MCF 10A (cell line): ENCODE measurements at regions of chr7 and their contacts with region 1.

Region 1: DNA sequence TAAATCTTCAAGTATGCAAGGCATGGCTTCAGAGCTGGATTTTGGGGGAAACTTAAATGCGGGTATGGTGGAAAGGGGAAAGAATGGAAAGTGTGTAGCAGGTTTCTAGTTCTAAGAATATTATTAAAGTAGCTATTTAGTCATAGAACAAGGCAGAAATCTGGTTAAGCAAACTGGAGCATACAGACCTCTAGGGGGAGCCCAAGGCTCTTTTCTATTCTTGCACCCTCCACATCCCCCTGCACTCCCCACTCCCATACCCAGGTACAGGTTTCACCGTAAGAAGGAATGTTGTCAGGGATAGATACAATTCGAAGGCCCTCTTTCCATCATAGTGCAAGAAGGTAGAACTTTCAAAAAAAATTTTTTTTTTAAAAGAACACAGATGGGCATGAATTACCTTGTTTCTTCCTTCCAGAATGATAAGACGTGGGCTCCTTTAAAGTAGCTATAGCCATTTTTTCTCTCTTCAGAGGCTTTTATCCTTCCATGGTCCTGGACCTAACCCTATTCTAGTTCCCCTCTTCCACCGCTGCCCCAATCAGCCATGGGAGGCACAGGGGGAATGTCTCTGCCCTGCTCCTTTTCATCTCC is 41.5 kb upstream of the SMIM30 start:
- DNase-seq: peak; percentile 54
- H3K4me3 Mint-ChIP-seq: no peak overlapping the region
- H3K27ac Mint-ChIP-seq: no peak overlapping the region
- H3K4me1 Mint-ChIP-seq: no peaks in the 10 kb centered on the region
- H3K27me3 Mint-ChIP-seq: no peaks in the 10 kb centered on the region
- CTCF ChIP-seq: peak; percentile 78

Region 2: DNA sequence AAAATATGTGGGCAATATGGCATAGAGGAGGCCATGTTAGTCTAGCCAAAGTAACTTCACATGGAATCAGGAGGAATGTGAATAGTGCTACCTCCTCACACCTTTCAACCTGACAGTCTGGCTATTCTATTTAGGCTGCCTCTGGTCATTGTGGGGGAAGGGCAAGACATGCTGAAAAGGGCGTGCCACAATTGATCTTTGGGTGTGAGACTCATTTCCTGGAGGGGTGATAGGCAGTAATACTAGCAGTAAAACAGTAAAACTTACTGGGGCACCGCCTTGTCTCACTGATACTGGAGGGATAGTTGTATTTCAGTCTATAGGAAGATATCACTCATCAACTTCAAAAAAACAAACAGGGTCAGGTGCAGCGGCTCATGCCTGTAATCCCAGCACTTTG is 458.4 kb before region 1 on chr7:
- CTCF ChIA-PET with region 1: no interaction called
- POLR2A ChIA-PET with region 1: no interaction called
- intact Hi-C with region 1: no loop called
- DNase-seq: no peak
- H3K4me3 Mint-ChIP-seq: no peak overlapping the region
- H3K27ac Mint-ChIP-seq: no peak overlapping the region
- H3K4me1 Mint-ChIP-seq: no peaks in the 10 kb centered on the region
- H3K27me3 Mint-ChIP-seq: no peaks in the 10 kb centered on the region
- CTCF ChIP-seq: no peak

Region 3: GRCh38 chr7:113015032-113015645 is 144.7 kb before region 1 on chr7:
- CTCF ChIA-PET with region 1: interaction called, 6 read pairs
- POLR2A ChIA-PET with region 1: no interaction called
- intact Hi-C with region 1: loop called (anchors 5 kb)
- DNase-seq: peak; percentile 53
- H3K4me3 Mint-ChIP-seq: no peak overlapping the region
- H3K27ac Mint-ChIP-seq: peak overlapping the region; percentile 70
- H3K4me1 Mint-ChIP-seq: peaks cover 15% of the 10 kb centered on the region
- H3K27me3 Mint-ChIP-seq: no peaks in the 10 kb centered on the region
- CTCF ChIP-seq: no peak

Region 4: DNA sequence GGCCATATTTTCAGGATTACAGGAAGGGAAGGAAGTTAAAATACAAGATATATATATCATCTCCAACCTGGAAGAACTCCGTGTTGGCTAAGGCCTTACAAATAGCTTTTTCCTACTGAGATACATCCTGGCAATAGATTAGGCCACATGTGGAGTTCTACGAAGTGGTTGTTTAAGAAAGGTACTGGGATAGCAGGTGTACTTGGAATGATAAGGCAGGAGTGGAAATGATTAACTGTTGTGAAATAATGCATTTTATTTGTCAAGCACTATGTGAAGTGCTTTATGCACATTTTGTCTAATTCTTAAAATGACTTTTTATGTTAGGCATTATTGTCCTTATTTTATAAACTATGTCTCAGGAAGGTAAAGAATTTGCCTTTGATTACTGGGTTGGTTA is 22.6 kb before region 1 on chr7:
- CTCF ChIA-PET with region 1: interaction called, 23 read pairs
- POLR2A ChIA-PET with region 1: no interaction called
- intact Hi-C with region 1: no loop called
- DNase-seq: no peak
- H3K4me3 Mint-ChIP-seq: no peak overlapping the region
- H3K27ac Mint-ChIP-seq: no peak overlapping the region
- H3K4me1 Mint-ChIP-seq: no peaks in the 10 kb centered on the region
- H3K27me3 Mint-ChIP-seq: no peaks in the 10 kb centered on the region
- CTCF ChIP-seq: no peak

Region 5: GRCh38 chr7:113289140-113289740 is 129.4 kb after region 1 on chr7:
- CTCF ChIA-PET with region 1: interaction called, 11 read pairs
- POLR2A ChIA-PET with region 1: no interaction called
- intact Hi-C with region 1: loop called (anchors 1 kb)
- DNase-seq: peak; percentile 64
- H3K4me3 Mint-ChIP-seq: no peak overlapping the region
- H3K27ac Mint-ChIP-seq: no peak overlapping the region
- H3K4me1 Mint-ChIP-seq: peaks cover 5% of the 10 kb centered on the region
- H3K27me3 Mint-ChIP-seq: no peaks in the 10 kb centered on the region
- CTCF ChIP-seq: peak; percentile 68

Region 6: DNA sequence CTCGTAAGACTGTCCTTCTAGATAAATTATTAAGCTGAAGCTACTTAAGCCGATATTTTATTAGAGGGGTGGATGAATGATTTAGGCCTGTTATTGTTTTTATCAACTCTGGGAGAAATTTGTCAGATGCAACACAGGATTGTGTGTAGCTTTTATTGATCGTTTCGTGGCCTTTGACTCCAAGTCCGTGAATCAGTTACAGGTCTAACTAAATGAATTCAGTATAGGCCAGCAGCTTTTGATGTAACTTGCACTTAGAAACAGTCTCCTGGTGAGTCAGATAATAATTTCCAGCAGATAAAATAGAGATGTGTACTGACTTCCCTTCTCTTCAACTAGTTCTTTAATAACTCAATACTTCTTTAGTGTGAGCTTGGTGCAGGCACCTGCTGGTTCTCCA is 300.2 kb after region 1 on chr7:
- CTCF ChIA-PET with region 1: no interaction called
- POLR2A ChIA-PET with region 1: no interaction called
- intact Hi-C with region 1: no loop called
- DNase-seq: no peak
- H3K4me3 Mint-ChIP-seq: no peak overlapping the region
- H3K27ac Mint-ChIP-seq: no peak overlapping the region
- H3K4me1 Mint-ChIP-seq: no peaks in the 10 kb centered on the region
- H3K27me3 Mint-ChIP-seq: no peaks in the 10 kb centered on the region
- CTCF ChIP-seq: no peak

Region 7: GRCh38 chr7:113698556-113699220 is 538.8 kb after region 1 on chr7:
- CTCF ChIA-PET with region 1: interaction called, 19 read pairs
- POLR2A ChIA-PET with region 1: no interaction called
- intact Hi-C with region 1: loop called (anchors 1 kb)
- DNase-seq: peak; percentile 49
- H3K4me3 Mint-ChIP-seq: no peak overlapping the region
- H3K27ac Mint-ChIP-seq: no peak overlapping the region
- H3K4me1 Mint-ChIP-seq: no peaks in the 10 kb centered on the region
- H3K27me3 Mint-ChIP-seq: no peaks in the 10 kb centered on the region
- CTCF ChIP-seq: peak; percentile 75

Region 8: GRCh38 chr7:113955157-113955556 is 795.3 kb after region 1 on chr7:
- CTCF ChIA-PET with region 1: no interaction called
- POLR2A ChIA-PET with region 1: no interaction called
- intact Hi-C with region 1: no loop called
- DNase-seq: no peak
- H3K4me3 Mint-ChIP-seq: no peak overlapping the region
- H3K27ac Mint-ChIP-seq: no peak overlapping the region
- H3K4me1 Mint-ChIP-seq: no peaks in the 10 kb centered on the region
- H3K27me3 Mint-ChIP-seq: peaks cover 16% of the 10 kb centered on the region
- CTCF ChIP-seq: no peak